Endothelial cell of umbilical vein (primary cell): ENCODE measurements at regions of chr4 and their contacts with region 1.

Region 1: DNA sequence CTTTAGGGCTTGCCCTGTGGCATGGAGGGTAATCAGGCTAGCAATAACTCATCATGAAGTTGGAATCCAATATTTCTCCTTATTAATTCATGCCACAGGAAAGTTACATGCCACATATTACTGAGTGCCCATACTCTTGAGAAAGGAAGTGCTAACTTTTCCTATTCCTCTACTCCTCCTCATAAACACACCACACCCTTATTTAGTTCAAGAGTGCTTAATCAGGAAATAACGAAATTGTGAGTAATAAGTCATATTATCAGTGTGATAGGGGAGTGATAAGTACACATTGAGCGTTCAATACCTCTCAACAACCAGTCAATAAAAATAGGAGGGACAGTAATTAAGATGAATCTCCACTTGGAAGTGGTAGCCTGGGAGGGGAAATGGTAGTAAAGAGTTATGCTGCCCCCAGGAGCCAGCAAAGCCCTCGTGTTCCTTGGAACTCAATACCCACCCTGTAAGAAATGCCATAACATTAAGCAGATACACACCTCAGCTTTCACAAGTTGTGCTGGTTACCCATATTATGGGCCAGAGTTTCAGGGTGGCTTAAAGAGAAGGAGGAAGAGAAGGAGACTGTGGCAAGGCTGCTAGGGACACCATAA is 410.0 kb upstream of the NR3C2 start:
- DNase-seq: peak; percentile 47
- H3K4me3 ChIP-seq: no peak overlapping the region
- H3K27ac ChIP-seq: peak overlapping the region; percentile 5
- H3K4me1 ChIP-seq: peaks cover 22% of the 10 kb centered on the region
- H3K27me3 ChIP-seq: no peaks in the 10 kb centered on the region
- CTCF ChIP-seq: peak in 1 of 2 donors; percentile 14
- POLR2A ChIP-seq: no peak

Region 2: DNA sequence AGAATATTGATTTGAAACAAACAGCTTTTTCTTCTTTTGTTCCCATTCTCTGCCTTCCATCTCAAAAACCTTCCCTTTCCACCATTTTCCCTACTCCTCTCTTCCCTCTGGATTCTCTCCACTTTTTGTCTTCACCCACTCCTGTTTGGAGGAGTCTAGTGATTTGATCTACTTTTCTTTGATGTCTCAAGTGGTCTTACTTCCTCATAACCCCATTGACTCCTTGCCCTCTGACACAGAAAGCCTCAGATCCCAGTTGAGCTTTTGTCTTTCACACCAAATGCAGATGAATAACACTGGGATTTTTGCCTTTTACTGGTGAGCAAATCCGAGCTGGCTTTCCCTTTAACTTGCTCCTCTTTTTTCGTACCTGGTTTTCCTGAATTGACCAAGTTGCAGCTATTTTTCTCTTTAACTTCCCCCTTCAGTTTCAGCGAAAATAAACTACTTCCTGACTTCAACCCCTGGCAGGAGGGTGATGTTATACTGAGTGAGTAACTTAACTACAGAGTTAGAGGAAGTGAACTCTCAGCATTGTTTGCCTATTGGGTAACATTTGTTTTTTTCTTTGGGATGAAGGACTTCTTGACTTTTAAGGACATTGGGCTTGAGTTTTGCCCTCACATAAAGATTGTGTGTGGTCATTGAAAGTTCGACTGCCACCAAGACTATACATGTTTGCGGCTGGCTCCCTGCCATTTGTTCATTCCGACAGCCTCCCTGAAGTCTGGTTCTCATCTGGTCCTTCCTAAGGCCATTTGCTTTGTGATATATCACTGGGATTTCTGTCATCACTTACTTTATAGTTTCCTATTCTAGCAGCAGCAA is 17.2 kb before region 1 on chr4:
- CTCF ChIA-PET with region 1: interaction called, 3 read pairs
- POLR2A ChIA-PET with region 1: no interaction called
- dilution Hi-C with region 1: no loop called
- intact Hi-C with region 1: loop called (anchors 2 kb)
- DNase-seq: peak; percentile 89
- H3K4me3 ChIP-seq: no peak overlapping the region
- H3K27ac ChIP-seq: peak overlapping the region; percentile 94
- H3K4me1 ChIP-seq: peaks cover 43% of the 10 kb centered on the region
- H3K27me3 ChIP-seq: no peaks in the 10 kb centered on the region
- CTCF ChIP-seq: no peak
- POLR2A ChIP-seq: no peak